Mammary epithelial cell (primary cell): ENCODE measurements at regions of chr12 and their contacts with region 1.

Region 1: GRCh38 chr12:86473231-86473630 is 217.0 kb upstream of the MGAT4C start:
- DNase-seq: no peak
- H3K4me3 ChIP-seq: no peak overlapping the region
- H3K27ac ChIP-seq: no peak overlapping the region
- H3K4me1 ChIP-seq: no peaks in the 10 kb centered on the region
- H3K27me3 ChIP-seq: no peaks in the 10 kb centered on the region
- CTCF ChIP-seq: no peak

Region 2: DNA sequence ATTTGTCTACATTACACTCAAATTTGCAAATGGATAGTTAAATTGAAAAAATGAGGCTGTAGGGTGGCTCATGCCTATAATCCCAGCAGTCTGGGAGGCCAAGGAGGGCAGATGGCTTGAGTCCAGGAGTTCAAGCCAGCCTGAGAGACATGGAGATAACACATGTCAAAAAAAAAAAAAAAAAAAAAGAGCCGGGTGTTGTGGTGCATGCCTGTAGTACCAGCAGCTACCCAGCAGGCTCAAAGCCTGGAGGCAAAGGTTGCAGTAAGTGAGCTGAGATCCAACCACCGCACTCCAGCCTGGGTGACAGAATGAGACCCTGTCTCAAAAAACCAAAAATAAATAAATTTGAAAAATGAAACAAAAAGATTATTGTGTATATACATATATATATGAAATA is 97.2 kb before region 1 on chr12:
- CTCF ChIA-PET with region 1: interaction called, 18 read pairs
- dilution Hi-C with region 1: no loop called
- in situ Hi-C with region 1: no loop called
- intact Hi-C with region 1: no loop called
- DNase-seq: no peak
- H3K4me3 ChIP-seq: no peak overlapping the region
- H3K27ac ChIP-seq: no peak overlapping the region
- H3K4me1 ChIP-seq: no peaks in the 10 kb centered on the region
- H3K27me3 ChIP-seq: no peaks in the 10 kb centered on the region
- CTCF ChIP-seq: peak in 1 of 2 donors; percentile 11